Gastrocnemius medialis (tissue), 4 donors: ENCODE measurements at regions of chr21 and their contacts with region 1.

Region 1: GRCh38 chr21:42009831-42010523 is at the start of gene ZBTB21:
- DNase-seq: peak; percentile 98 to 99
- ATAC-seq: peak; percentile 92
- H3K4me3 ChIP-seq: peak within 1 kb of the TSS; percentile 70 to 91 (median 73)
- H3K27ac ChIP-seq: peak within 1 kb of the TSS; percentile 92 to 98 (median 96)
- H3K4me1 ChIP-seq: peaks cover 5 to 14% of the 10 kb centered on the region in 2 donors
- H3K27me3 ChIP-seq: no peaks in the 10 kb centered on the region
- CTCF ChIP-seq: peak in 2 of 5 experiments; percentile 8 to 16
- POLR2A ChIP-seq: peak; percentile 98
- total RNA-seq, gene ZBTB21: 1.9 to 5.0 (median 4.0) TPM

Region 2: DNA sequence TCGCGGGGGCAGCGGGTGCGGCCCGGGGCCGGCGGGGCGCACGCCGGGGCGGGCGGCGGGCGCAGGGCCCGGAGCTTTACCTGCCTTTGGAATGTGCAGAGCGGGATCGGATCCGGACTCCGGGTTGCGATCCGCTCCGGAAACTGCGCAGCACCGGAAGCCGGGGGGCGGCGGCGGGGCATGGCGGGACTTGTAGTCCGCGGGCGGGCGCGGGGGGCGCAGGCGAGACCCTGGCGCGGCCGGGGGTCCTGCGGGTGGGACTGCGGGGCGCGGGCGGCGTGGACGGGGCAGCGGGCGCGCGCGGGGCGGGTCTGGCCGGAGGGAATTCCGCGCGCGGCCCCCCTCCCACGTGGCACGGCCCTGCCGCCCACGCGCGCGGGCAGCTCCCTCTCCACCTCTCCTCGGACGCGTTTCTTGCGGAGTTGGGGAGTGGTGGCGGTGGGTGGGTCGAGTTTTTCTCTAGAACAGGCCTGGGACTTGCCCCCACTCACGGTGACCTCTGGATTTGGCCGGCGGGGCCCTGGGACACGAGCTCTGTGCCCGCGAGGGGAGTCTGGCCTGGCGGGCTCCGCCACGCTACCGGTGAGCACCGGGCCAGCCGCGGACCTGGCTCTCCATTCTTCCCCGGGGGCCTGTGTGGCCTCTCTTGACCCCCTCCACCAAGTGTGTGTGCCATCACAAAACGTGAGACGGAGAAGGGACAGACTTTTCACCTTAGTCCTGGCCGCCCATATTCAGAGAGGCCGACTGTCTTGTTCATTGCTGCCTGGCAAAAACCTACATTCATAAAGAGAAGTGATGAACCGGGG is 130.6 kb before region 1 on chr21 and contains the start of gene PRDM15:
- in situ Hi-C with region 1: no loop called
- intact Hi-C with region 1: loop called (anchors 2 kb)
- DNase-seq: peak; percentile 69 to 71
- ATAC-seq: peak; percentile 92 to 93
- H3K4me3 ChIP-seq: peak within 1 kb of the TSS; percentile 86 to 96 (median 90)
- H3K27ac ChIP-seq: peak within 1 kb of the TSS; percentile 86 to 89 (median 86)
- H3K4me1 ChIP-seq: peaks cover 6 to 9% of the 10 kb centered on the region in 2 donors
- H3K27me3 ChIP-seq: no peaks in the 10 kb centered on the region
- CTCF ChIP-seq: no peak
- POLR2A ChIP-seq: peak in 1 of 2 donors; percentile 20
- total RNA-seq, gene PRDM15: 4.4 to 13.6 (median 5.4) TPM

Region 3: GRCh38 chr21:41953831-41954653 is 55.9 kb before region 1 on chr21 and contains the start of gene C2CD2:
- in situ Hi-C with region 1: no loop called
- intact Hi-C with region 1: loop called (anchors 1 kb)
- DNase-seq: no peak
- ATAC-seq: peak; percentile 60 to 67
- H3K4me3 ChIP-seq: peak within 1 kb of the TSS; percentile 61 to 68 (median 62)
- H3K27ac ChIP-seq: peak within 1 kb of the TSS; percentile 53 to 71 (median 64)
- H3K4me1 ChIP-seq: peaks cover 33 to 38% of the 10 kb centered on the region in 2 donors
- H3K27me3 ChIP-seq: peaks cover 0 to 17% (median 0%) of the 10 kb centered on the region in 3 donors
- CTCF ChIP-seq: no peak
- POLR2A ChIP-seq: peak; percentile 56 to 60
- total RNA-seq, gene C2CD2: 1.7 to 7.2 (median 2.4) TPM

Region 4: DNA sequence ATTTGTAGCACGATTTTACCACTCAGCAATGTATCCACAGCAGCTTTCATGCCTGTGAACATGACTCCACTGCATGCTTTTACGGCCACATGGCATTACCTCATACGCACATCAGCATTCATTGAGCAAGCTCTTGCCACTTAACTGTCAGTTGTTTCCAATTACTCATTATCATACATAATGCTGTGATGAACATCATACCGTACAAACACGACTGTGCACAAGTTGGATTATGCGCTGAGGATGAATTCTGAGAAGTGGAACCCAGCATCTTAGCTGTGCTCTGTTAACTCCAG is 70.8 kb after region 1 on chr21:
- in situ Hi-C with region 1: no loop called
- intact Hi-C with region 1: loop called (anchors 1 kb)
- DNase-seq: peak; percentile 29 to 35
- ATAC-seq: peak; percentile 84 to 95
- H3K4me3 ChIP-seq: no peak overlapping the region
- H3K27ac ChIP-seq: peak overlapping the region in 1 of 4 donors; percentile 57
- H3K4me1 ChIP-seq: peaks cover 4 to 9% of the 10 kb centered on the region in 2 donors
- H3K27me3 ChIP-seq: no peaks in the 10 kb centered on the region
- CTCF ChIP-seq: no peak
- POLR2A ChIP-seq: no peak

Region 5: GRCh38 chr21:42107881-42108553 is 98.0 kb after region 1 on chr21:
- in situ Hi-C with region 1: loop called in 2 of 4 experiments (anchors 10 to 25 kb)
- intact Hi-C with region 1: loop called (anchors 2 kb)
- DNase-seq: peak; percentile 23 to 75
- ATAC-seq: peak; percentile 80 to 91
- H3K4me3 ChIP-seq: no peak overlapping the region
- H3K27ac ChIP-seq: peak overlapping the region in 2 of 4 donors; percentile 34 to 57
- H3K4me1 ChIP-seq: peaks cover 0 to 13% of the 10 kb centered on the region in 2 donors
- H3K27me3 ChIP-seq: peaks cover 0 to 5% (median 0%) of the 10 kb centered on the region in 3 donors
- CTCF ChIP-seq: peak; percentile 19 to 66 (median 52)
- POLR2A ChIP-seq: no peak

Region 6: DNA sequence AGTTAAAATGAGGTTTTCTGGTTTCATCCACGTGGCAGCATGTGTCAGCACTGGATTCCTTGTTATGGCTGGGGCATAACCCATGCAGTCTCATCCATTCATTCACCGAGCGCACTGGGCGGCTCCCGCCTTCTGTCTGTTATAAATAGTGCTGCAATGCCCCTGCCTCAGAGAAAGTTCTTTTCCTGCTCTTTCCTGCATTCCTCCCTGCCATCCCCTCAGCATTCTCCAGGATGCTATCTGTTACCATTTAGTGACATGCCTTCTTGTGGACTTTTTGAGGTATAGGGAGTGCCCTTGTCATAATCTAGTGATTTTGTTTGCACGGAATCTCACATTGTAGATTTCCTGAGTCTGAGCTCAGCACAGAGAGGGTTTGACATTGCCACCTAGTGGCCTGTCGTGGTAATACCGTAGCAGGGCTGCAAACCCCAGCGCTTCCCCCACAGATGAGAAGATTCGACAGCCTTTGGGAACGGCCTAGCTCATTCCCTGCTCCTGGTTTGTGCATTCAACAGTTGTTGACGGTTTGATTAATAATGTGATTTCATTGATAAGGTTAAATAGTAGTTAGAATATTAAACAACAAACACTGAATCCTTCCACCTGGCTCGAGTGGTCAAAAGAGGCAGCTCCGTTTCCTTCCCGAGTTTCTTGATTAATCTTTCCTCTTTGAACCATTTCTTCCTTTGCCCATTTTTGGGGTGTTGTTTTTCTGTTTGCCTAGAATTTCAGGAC is 107.4 kb after region 1 on chr21:
- in situ Hi-C with region 1: loop called in 2 of 4 experiments (anchors 10 to 25 kb)
- intact Hi-C with region 1: loop called (anchors 1 kb)
- DNase-seq: peak in 1 of 2 donors; percentile 46
- ATAC-seq: peak; percentile 66 to 87
- H3K4me3 ChIP-seq: no peak overlapping the region
- H3K27ac ChIP-seq: no peak overlapping the region
- H3K4me1 ChIP-seq: peaks cover 0 to 3% of the 10 kb centered on the region in 2 donors
- H3K27me3 ChIP-seq: peaks cover 0 to 11% (median 7%) of the 10 kb centered on the region in 3 donors
- CTCF ChIP-seq: peak; percentile 80 to 91 (median 87)
- POLR2A ChIP-seq: no peak

Region 7: DNA sequence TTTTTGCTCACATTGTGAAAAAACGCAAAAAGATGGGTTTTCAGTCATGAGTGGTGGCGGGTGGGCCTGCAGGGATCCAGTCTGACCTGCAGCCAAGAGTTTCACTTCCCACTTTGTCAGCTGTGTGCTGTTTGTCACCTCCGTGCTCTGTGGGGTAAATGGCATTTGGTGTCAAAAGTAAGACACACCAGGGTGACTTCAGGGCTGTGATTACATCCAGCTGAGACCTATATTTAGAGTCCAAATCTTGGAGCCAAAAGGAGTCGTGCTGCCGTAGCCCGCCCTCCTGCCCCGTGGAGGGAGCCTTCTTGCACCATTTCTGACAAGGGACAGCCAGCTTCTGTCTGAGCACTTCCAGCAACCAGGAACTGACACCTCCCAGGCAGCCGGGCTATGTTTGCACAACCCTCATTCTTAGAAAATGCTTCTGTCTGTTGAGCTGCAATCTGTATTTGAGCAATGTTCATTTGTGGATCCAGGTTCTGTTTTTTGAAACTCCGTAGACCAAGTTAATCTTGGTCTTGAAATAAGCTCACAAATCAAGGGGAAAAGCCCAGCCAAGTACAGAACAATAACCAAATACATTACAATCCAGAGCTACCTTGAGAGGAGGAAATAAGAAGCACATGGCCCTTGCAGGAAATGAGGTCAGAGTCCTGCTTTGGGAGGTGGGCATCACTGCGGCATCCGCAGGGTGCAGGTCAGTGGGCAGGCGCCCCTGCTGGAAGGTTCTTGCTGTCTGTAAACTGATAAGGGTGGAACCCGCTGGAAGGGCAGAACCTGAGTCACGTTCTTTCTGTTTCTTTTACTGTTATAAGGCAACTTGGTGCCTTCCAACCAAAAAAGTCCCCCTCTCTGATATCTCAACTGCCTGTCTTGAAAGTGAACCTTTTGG is 223.3 kb after region 1 on chr21:
- in situ Hi-C with region 1: no loop called
- intact Hi-C with region 1: loop called (anchors 5 kb)
- DNase-seq: peak; percentile 95 to 99
- ATAC-seq: peak; percentile 73 to 83
- H3K4me3 ChIP-seq: peak overlapping the region; percentile 32 to 71 (median 56)
- H3K27ac ChIP-seq: peak overlapping the region; percentile 89 to 99 (median 93)
- H3K4me1 ChIP-seq: peaks cover 90 to 91% of the 10 kb centered on the region in 2 donors
- H3K27me3 ChIP-seq: no peaks in the 10 kb centered on the region
- CTCF ChIP-seq: peak; percentile 30 to 67 (median 39)
- POLR2A ChIP-seq: peak; percentile 27 to 48